ENCODE measurements at regions of chr9 and their contacts with region 1.

Region 1: GRCh38 chr9:33277484-33277883 is 12.6 kb downstream of the CHMP5 start:
- DNase-seq: no peak
- H3K4me3 ChIP-seq: no peak overlapping the region
- H3K27ac ChIP-seq: no peak overlapping the region
- H3K4me1 ChIP-seq: no peaks in the 10 kb centered on the region
- H3K27me3 ChIP-seq: no peaks in the 10 kb centered on the region
- CTCF ChIP-seq: no peak
- POLR2A ChIP-seq: no peak

Region 2: GRCh38 chr9:33816327-33817252 is 539.1 kb after region 1 on chr9 and contains the start of gene UBE2R2:
- intact Hi-C with region 1: loop called (anchors 5 kb)
- DNase-seq: peak; percentile 82 to 93
- H3K4me3 ChIP-seq: peak within 1 kb of the TSS; percentile 84 to 91 (median 90)
- H3K27ac ChIP-seq: peak within 1 kb of the TSS; percentile 98 to 99
- H3K4me1 ChIP-seq: peaks cover 0 to 9% of the 10 kb centered on the region in 2 donors
- H3K27me3 ChIP-seq: no peaks in the 10 kb centered on the region
- CTCF ChIP-seq: peak in 1 of 3 donors; percentile 10
- POLR2A ChIP-seq: peak; percentile 48
- total RNA-seq, gene UBE2R2: 21.2 to 35.0 (median 22.6) TPM

Region 3: DNA sequence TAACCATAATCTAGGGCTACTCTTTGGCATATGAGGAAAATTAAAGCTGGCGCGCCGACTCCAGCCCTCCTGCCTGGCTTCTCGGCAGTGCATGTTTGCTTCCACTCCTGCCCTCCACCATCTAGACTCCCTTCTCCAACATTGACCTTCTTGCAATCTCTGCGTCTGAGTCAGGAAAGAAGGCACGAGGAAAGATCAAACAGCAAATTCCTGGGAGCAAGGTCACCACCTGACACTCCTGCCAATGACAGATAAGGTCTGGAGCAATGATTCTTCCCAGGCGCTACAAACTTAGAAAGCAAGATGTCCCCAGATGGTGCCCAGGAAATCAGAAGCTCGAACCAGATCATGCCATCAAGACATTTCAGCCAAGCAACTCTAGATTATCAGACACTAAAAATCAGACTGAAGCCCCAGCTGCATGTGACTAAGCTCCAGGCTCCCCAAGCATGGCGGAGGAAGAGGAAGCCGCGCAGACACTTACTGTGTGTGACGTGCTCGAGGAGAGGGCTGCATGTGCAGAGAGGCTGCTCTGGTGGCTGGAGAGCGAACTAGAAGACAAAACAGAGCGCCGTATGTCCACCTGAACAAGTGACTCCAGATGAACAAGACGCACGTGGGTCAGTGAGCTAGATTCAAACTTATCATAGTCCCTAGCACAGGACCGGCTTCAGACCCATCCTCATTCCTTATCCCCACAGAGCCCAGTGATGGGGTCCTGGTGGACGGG is 654.8 kb after region 1 on chr9:
- intact Hi-C with region 1: loop called (anchors 5 kb)
- DNase-seq: no peak
- H3K4me3 ChIP-seq: no peak overlapping the region
- H3K27ac ChIP-seq: no peak overlapping the region
- H3K4me1 ChIP-seq: no peaks in the 10 kb centered on the region
- H3K27me3 ChIP-seq: no peaks in the 10 kb centered on the region
- CTCF ChIP-seq: no peak
- POLR2A ChIP-seq: no peak

Measured in breast epithelium (tissue), 4 donors.